ENCODE measurements at regions of chr1 and their contacts with region 1.

Region 1: GRCh38 chr1:117436513-117436912 is 69.3 kb downstream of the MAN1A2 start:
- DNase-seq: no peak
- ATAC-seq: peak; percentile 55
- H3K4me3 ChIP-seq: no peak overlapping the region
- H3K27ac ChIP-seq: no peak overlapping the region
- H3K4me1 ChIP-seq: no peaks in the 10 kb centered on the region
- H3K27me3 ChIP-seq: no peaks in the 10 kb centered on the region
- CTCF ChIP-seq: no peak

Region 2: GRCh38 chr1:117416546-117417125 is 19.9 kb before region 1 on chr1:
- CTCF ChIA-PET with region 1: no interaction called
- POLR2A ChIA-PET with region 1: no interaction called
- intact Hi-C with region 1: loop called (anchors 2 kb)
- DNase-seq: no peak
- ATAC-seq: no peak
- H3K4me3 ChIP-seq: no peak overlapping the region
- H3K27ac ChIP-seq: no peak overlapping the region
- H3K4me1 ChIP-seq: peaks cover 26% of the 10 kb centered on the region
- H3K27me3 ChIP-seq: no peaks in the 10 kb centered on the region
- CTCF ChIP-seq: no peak

Measured in PC-3 (cell line).